AG04449 (cell line): ENCODE measurements at regions of chr2 and their contacts with region 1.

Region 1: GRCh38 chr2:216222650-216223352 is 113.7 kb downstream of the XRCC5 start:
- DNase-seq: no peak
- H3K4me3 ChIP-seq: no peak overlapping the region
- CTCF ChIP-seq: peak; percentile 49

Region 2: DNA sequence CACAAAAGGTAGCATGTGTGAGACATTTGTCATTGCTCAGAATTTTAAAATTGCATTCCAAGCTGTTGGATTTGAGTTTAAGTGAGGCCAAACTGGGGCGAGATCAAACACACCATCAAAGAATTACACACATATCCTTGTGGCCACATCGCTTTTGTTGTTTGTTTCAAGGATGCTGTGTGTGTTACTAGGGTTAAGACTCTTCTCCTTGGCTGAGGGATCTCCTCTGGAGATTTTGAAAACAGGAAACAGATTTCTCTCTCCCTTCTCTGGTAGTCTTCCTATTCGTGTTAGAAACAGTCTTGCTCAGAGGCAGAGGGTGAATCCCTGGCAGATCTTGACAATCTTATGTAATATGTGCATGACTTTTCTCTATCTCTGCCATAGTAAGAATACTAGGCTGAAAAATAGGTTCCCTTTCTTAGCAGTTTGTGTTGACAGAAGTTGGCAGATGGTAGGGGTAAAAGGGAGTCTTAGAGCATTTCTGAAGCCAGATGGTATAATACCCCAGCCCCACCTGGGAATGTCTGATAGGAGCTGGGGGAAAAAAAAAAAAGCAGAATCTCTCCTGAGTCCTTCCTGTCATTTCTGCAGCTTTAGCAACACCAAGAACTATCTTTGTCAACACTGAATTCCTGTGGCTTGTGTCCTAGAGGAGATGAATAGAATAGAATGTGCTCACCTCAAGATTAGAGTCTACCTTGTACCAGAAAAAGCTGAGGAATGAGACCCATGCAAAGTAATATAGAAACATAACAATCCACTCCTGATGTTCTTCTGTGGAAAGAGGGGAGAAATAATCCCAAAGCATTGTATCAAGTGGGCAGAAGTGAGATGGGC is 11.9 kb before region 1 on chr2:
- CTCF ChIA-PET with region 1: interaction called, 13 read pairs
- POLR2A ChIA-PET with region 1: no interaction called
- DNase-seq: no peak
- H3K4me3 ChIP-seq: no peak overlapping the region
- CTCF ChIP-seq: no peak